Cardiac septum (tissue), 1 donor: ENCODE measurements at regions of chr18 and their contacts with region 1.

Region 1: GRCh38 chr18:62643181-62643580 is 72.2 kb upstream of the PHLPP1 start:
- DNase-seq: no peak

Region 2: GRCh38 chr18:62702253-62702652 is 59.1 kb after region 1 on chr18:
- intact Hi-C with region 1: loop called (anchors 10 kb)
- DNase-seq: no peak

Region 3: GRCh38 chr18:62863579-62864001 is 220.4 kb after region 1 on chr18:
- intact Hi-C with region 1: no loop called
- DNase-seq: no peak